HepG2 (cell line): ENCODE measurements at regions of chr7 and their contacts with region 1.

Region 1: DNA sequence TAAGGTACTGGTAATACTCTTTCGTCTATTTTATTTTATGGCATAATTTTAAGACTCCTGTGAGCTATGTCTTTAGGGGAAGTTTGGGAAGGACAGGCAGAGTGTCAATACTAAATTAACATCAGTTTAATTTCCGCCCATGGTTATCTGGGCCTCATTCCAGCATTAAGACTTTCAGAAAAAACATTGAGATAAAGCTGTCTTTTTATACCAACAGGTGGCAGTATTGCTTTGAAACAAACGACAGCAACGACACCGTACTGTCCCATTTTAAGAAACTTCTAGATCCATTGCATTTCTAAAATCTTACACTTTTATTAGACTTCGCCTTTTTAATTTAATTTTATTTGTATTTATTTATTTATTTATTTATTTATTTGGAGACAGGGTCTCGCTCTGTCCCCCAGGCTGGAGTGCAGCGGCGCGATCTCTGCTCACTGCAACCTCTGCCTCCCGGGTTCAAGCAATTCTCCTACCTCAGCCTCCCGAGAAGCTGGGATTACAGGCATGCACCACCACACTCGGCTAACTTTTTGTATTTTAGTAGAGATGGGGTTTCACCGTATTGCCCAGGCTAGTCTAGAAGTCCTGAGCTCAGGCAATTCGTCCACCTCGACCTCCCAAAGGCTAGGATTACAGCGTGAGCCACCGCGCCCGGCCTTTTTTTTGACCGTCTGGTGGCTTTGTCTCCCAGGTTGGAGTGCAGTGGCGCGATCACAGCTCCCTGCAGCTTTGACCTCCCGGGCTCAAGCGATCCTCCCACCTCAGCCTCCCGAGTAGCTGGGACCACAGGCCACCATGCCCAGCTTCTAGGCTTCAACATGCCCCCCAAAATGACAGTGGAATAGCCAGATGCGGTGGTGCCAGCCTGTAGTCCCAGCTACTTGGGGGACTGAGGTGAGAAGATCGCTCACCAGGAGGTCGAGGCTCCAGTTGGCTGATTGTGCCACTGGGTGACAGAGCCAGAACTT is 78.7 kb upstream of the C1GALT1 start:
- DNase-seq: peak; percentile 61
- ATAC-seq: peak; percentile 62
- H3K4me3 ChIP-seq: no peak overlapping the region
- H3K27ac ChIP-seq: no peak overlapping the region
- H3K4me1 ChIP-seq: peaks cover 61% of the 10 kb centered on the region
- H3K27me3 ChIP-seq: no peaks in the 10 kb centered on the region
- CTCF ChIP-seq: peak; percentile 72
- EP300 ChIP-seq: no peak
- POLR2A ChIP-seq: no peak
- RAD21 ChIP-seq: peak; percentile 59

Region 2: DNA sequence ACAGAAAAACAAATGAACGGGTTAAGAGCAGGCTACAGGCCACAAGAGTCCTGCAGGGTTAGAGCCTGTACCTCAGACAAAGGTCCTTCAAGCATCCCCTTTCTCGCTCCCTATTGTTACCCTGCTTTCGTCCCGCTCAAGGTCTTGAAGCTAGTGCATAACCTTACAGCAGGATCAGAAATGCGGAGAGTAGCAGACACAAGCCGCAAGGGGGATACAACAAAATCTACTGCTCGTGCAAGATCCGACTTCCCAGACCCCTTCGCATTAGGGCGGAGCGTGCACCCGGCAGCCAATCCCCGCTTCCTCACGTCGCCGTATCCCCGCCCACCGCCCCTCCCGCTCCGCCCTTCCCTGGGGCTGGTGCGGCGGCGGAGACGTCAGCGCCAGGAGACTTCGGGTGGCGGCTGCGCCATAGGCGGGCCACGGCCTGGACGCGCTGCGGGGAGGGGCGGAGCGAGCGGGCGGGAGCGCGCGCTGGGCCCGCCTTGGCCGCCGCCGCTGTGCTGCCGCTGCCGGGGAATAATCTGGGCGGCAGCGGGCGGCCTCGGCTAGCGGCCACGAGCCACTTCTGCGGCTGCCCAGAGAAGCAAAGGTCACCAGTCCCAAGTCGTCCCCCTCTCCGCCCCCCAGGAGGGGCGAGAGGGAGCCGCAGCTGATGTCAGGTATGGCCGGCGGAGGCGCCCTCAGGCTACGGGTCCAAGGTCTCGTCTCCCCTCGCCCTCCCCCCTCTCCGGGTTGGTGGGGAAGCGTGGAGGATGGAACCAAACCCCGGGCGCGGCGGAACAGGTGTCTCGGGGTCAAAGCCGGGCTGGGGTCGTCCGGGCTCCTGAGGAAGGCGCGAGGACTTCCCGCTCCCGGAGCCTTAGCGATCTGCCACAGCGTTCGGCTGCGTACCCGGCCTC is 78.8 kb after region 1 on chr7 and contains the start of gene C1GALT1:
- CTCF ChIA-PET with region 1: no interaction called
- POLR2A ChIA-PET with region 1: interaction called, 13 read pairs
- in situ Hi-C with region 1: loop called (anchors 5 kb)
- intact Hi-C with region 1: loop called (anchors 2 kb)
- DNase-seq: peak; percentile 95
- ATAC-seq: peak; percentile 87
- H3K4me3 ChIP-seq: peak within 1 kb of the TSS; percentile 79 to 96 (median 83)
- H3K27ac ChIP-seq: peak within 1 kb of the TSS; percentile 98
- H3K4me1 ChIP-seq: peaks cover 63% of the 10 kb centered on the region
- H3K27me3 ChIP-seq: no peaks in the 10 kb centered on the region; a peak in 1 of 5 replicates
- CTCF ChIP-seq: peak; percentile 77
- EP300 ChIP-seq: peak; percentile 11 to 36; a peak in 1 of 4 replicates
- POLR2A ChIP-seq: peak; percentile 90 to 96
- RAD21 ChIP-seq: peak; percentile 73
- total RNA-seq, gene C1GALT1: 65.9 and 68.2 TPM in 2 replicates

Region 3: DNA sequence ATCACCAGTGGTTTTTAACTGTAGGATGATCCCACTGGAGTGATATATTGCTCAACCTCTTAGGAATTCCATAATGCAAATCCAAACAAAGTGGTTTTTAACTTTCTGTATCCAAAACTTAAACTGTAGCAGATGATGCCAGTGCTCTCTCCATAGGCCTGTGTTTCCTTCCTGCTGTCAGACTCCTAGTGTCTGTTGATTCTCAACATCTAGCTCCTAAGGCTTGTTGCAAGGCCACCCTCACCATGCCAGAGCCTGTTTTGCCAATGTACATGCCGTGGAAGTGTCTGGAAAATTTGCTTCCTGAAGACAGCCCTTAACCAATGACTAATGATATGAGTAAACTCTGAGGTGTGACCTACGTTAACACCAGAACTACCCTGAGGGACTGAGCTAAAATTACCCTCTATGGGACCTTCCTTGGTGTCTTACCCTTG is 118.0 kb after region 1 on chr7:
- CTCF ChIA-PET with region 1: no interaction called
- POLR2A ChIA-PET with region 1: no interaction called
- in situ Hi-C with region 1: loop called (anchors 10 kb)
- intact Hi-C with region 1: loop called (anchors 5 kb)
- DNase-seq: no peak
- ATAC-seq: no peak
- H3K4me3 ChIP-seq: no peak overlapping the region
- H3K27ac ChIP-seq: no peak overlapping the region
- H3K4me1 ChIP-seq: peaks cover 42% of the 10 kb centered on the region
- H3K27me3 ChIP-seq: no peaks in the 10 kb centered on the region
- CTCF ChIP-seq: no peak
- EP300 ChIP-seq: no peak
- POLR2A ChIP-seq: no peak
- RAD21 ChIP-seq: no peak

Region 4: DNA sequence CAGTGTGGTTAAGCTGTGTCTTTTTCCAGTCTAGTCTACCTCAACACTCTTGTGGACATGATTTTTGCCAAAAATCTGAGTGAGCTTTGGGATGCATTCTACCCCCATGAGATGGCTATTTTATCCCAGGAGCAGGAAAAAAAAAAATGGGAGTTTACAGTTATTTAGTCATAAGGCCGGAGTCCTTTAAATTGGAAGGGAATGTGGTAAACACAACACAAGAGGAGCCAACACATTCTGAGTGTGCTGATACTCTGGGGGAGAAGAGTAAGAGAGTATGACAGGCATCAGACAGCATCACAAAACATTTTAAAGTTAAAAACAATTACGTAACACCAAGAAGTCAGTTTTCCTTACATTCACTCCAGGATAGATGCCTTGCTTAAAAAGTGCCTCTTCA is 124.8 kb after region 1 on chr7:
- CTCF ChIA-PET with region 1: no interaction called
- POLR2A ChIA-PET with region 1: no interaction called
- in situ Hi-C with region 1: loop called (anchors 10 kb)
- intact Hi-C with region 1: loop called (anchors 5 kb)
- DNase-seq: no peak
- ATAC-seq: no peak
- H3K4me3 ChIP-seq: no peak overlapping the region
- H3K27ac ChIP-seq: no peak overlapping the region
- H3K4me1 ChIP-seq: no peaks in the 10 kb centered on the region
- H3K27me3 ChIP-seq: no peaks in the 10 kb centered on the region
- CTCF ChIP-seq: no peak
- EP300 ChIP-seq: no peak
- POLR2A ChIP-seq: no peak
- RAD21 ChIP-seq: no peak

Region 5: GRCh38 chr7:7424151-7424873 is 320.7 kb after region 1 on chr7:
- CTCF ChIA-PET with region 1: no interaction called
- POLR2A ChIA-PET with region 1: no interaction called
- in situ Hi-C with region 1: no loop called
- intact Hi-C with region 1: loop called (anchors 5 kb)
- DNase-seq: peak; percentile 58
- ATAC-seq: peak; percentile 95
- H3K4me3 ChIP-seq: peak overlapping the region in 2 of 3 experiments; percentile 5 to 25; a peak in 2 of 6 replicates
- H3K27ac ChIP-seq: no peak overlapping the region
- H3K4me1 ChIP-seq: no peaks in the 10 kb centered on the region
- H3K27me3 ChIP-seq: no peaks in the 10 kb centered on the region
- CTCF ChIP-seq: peak; percentile 89
- EP300 ChIP-seq: no peak
- POLR2A ChIP-seq: no peak
- RAD21 ChIP-seq: peak; percentile 91

Region 6: GRCh38 chr7:7535691-7536090 is 432.1 kb after region 1 on chr7 and contains the start of gene COL28A1:
- CTCF ChIA-PET with region 1: interaction called, 4 read pairs
- POLR2A ChIA-PET with region 1: no interaction called
- in situ Hi-C with region 1: no loop called
- intact Hi-C with region 1: loop called (anchors 10 kb)
- DNase-seq: no peak
- ATAC-seq: no peak
- H3K4me3 ChIP-seq: no peak within 1 kb of the TSS
- H3K27ac ChIP-seq: no peak within 1 kb of the TSS
- H3K4me1 ChIP-seq: no peaks in the 10 kb centered on the region
- H3K27me3 ChIP-seq: no peaks in the 10 kb centered on the region
- CTCF ChIP-seq: no peak
- EP300 ChIP-seq: no peak
- POLR2A ChIP-seq: no peak
- RAD21 ChIP-seq: no peak
- total RNA-seq, gene COL28A1: 0.07 TPM in 1 of 2 replicates, not detected in the other